ENCODE measurements at regions of chr17 and their contacts with region 1.

Region 1: DNA sequence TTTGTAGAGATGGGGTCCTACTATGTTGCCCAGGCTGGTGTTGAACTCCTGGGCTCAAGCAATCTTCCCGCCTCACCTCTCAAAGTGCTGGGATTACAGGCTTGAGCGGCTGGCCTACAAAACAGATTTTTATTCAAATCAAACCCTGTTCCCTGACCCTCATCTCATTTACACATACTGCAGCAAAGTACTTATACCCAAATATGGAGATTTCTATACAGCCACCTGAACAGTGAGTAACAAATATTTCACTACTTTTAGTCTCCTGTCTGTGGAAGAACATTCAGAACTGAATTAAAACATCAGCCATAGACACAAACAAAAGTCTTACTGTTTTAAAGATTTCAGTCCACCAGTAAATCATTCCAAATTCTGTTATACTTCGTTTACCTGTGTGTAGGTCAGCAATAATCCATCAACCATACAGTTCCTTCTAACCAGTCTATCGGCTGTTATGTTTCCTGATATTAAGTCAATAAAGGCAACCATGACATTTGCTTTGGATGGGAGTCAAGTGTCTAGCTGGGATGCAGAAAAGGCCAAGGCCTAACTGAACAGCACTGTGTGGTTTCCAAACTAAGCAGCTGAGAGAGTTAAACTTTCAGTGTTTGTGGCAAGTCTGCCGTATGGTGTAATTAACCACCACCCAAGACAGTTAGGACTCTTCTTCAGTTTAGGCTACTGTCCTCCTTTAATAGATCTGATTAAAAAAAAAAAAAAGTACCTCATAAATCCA is 22.3 kb downstream of the ERN1 start:
- DNase-seq: no peak
- ATAC-seq: no peak
- H3K4me3 ChIP-seq: no peak overlapping the region
- H3K4me3 Mint-ChIP-seq: peak overlapping the region; percentile 3
- H3K27ac ChIP-seq: peak overlapping the region in 1 of 2 experiments; percentile 49
- H3K27ac Mint-ChIP-seq: peak overlapping the region; percentile 87
- H3K4me1 ChIP-seq: peaks cover 24% of the 10 kb centered on the region
- H3K4me1 Mint-ChIP-seq: peaks cover 69% of the 10 kb centered on the region
- H3K27me3 ChIP-seq: no peaks in the 10 kb centered on the region
- H3K27me3 Mint-ChIP-seq: no peaks in the 10 kb centered on the region
- CTCF ChIP-seq: no peak

Region 2: GRCh38 chr17:64081802-64082799 is 25.6 kb before region 1 on chr17:
- CTCF ChIA-PET with region 1: no interaction called
- POLR2A ChIA-PET with region 1: interaction called, 4 read pairs
- intact Hi-C with region 1: loop called in 1 of 2 experiments (anchors 2 kb)
- DNase-seq: peak in 5 of 9 experiments; percentile 17 to 68 (median 48)
- ATAC-seq: peak; percentile 83
- H3K4me3 ChIP-seq: peak overlapping the region in 1 of 2 experiments; percentile 10
- H3K4me3 Mint-ChIP-seq: peak overlapping the region; percentile 35
- H3K27ac ChIP-seq: peak overlapping the region in 1 of 2 experiments; percentile 50
- H3K27ac Mint-ChIP-seq: peak overlapping the region; percentile 66
- H3K4me1 ChIP-seq: peaks cover 37% of the 10 kb centered on the region
- H3K4me1 Mint-ChIP-seq: peaks cover 14% of the 10 kb centered on the region
- H3K27me3 ChIP-seq: no peaks in the 10 kb centered on the region
- H3K27me3 Mint-ChIP-seq: no peaks in the 10 kb centered on the region
- CTCF ChIP-seq: no peak

Region 3: DNA sequence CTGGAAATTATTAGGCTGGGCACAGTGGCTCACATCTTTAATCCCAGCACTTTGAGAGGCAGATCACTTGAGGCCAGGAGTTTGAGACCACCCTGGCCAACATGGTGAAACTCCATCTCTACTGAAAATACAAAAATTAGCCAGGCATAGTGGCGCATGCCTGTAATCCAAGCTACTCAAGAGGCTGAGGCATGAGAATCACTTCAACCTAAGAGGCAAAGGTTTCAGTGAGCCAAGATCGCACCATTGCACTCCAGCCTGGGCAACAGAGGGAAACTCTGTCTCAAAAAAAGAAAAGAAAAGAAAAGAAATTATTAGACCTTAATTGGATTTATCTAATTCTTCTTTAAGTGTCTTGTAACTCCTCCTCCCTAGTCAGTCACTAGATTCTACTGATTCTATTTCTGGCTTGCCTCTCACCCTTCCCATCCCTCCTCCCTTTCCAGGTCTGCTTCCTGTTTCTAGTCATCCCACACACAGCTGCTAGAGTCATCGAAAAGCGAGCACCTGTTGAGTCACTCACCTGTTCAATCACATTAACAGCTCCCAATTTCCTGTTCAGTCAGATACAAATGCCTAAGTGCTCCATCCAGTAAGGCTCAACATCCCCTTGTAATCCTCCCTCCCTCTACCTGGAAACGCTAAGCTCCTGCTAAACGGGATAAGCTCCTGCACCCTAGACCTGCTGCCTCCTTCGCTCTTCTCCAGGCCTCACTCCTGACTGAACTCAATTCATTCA is 12.4 kb before region 1 on chr17:
- CTCF ChIA-PET with region 1: no interaction called
- POLR2A ChIA-PET with region 1: no interaction called
- intact Hi-C with region 1: no loop called
- DNase-seq: no peak
- ATAC-seq: no peak
- H3K4me3 ChIP-seq: no peak overlapping the region
- H3K4me3 Mint-ChIP-seq: no peak overlapping the region
- H3K27ac ChIP-seq: no peak overlapping the region
- H3K27ac Mint-ChIP-seq: peak overlapping the region; percentile 62
- H3K4me1 ChIP-seq: peaks cover 6% of the 10 kb centered on the region
- H3K4me1 Mint-ChIP-seq: peaks cover 63% of the 10 kb centered on the region
- H3K27me3 ChIP-seq: no peaks in the 10 kb centered on the region
- H3K27me3 Mint-ChIP-seq: no peaks in the 10 kb centered on the region
- CTCF ChIP-seq: no peak